Activated CD4-positive, alpha-beta memory T cell treated with anti-CD3 and anti-CD28 coated beads, Interleukin-2, amount 10 ng/mL, durations not matched to agents 7 days and 5 days (primary cell): ENCODE measurements at regions of chr13 and their contacts with region 1.

Region 1: GRCh38 chr13:95403828-95404522 is 102.7 kb upstream of the ABCC4 start:
- DNase-seq: peak; percentile 79
- H3K4me3 Mint-ChIP-seq: peak overlapping the region; percentile 80
- H3K27ac Mint-ChIP-seq: no peak overlapping the region
- H3K4me1 Mint-ChIP-seq: peaks cover 10% of the 10 kb centered on the region
- H3K27me3 Mint-ChIP-seq: peaks cover 3% of the 10 kb centered on the region

Region 2: GRCh38 chr13:95128045-95128643 is 275.8 kb before region 1 on chr13:
- CTCF ChIA-PET with region 1: no interaction called
- POLR2A ChIA-PET with region 1: no interaction called
- DNase-seq: no peak
- H3K4me3 Mint-ChIP-seq: no peak overlapping the region
- H3K27ac Mint-ChIP-seq: no peak overlapping the region
- H3K4me1 Mint-ChIP-seq: no peaks in the 10 kb centered on the region
- H3K27me3 Mint-ChIP-seq: no peaks in the 10 kb centered on the region

Region 3: GRCh38 chr13:95156208-95156607 is 247.8 kb before region 1 on chr13:
- CTCF ChIA-PET with region 1: interaction called, 10 read pairs
- POLR2A ChIA-PET with region 1: no interaction called
- DNase-seq: no peak
- H3K4me3 Mint-ChIP-seq: no peak overlapping the region
- H3K27ac Mint-ChIP-seq: no peak overlapping the region
- H3K4me1 Mint-ChIP-seq: peaks cover 7% of the 10 kb centered on the region
- H3K27me3 Mint-ChIP-seq: no peaks in the 10 kb centered on the region

Region 4: DNA sequence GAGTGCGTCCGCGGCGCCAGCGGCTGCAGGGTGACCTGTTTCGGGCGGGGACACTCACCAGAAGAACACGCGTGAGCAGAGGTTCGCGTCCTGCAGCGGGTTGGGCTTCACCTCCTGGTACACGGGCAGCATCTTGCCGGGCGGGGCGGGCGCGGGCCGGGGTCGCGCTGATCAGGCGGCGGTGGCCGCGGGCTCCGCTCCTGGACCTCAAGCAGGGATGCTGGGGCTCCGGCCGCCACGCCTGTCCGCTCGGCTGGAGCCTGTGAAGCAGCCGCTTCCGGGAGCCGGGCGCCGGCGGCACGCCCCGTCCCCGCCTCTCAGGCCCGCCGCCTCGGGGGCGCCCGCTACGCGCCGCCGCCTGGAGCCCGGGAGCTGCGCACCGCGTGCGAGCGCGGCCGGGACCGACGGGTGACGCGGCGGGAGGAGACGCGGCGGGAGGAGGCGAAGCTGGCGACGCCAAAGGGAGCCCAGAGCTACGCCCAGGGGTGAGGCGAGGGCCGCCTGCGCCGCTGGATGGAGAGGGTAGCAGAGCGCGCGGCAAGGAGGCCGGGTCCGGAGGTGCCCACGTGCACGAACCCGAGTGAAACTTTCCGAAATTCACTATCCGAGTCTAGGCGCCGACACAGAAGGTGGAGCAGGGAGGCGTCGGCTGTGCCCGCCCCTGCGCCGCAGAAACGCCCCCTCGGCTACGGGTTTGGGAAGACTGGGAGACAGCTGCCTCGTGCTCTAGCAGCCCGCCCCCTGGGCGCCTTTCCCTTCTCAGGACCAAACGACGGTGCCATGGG is 102.6 kb before region 1 on chr13 and contains the start of gene ABCC4:
- CTCF ChIA-PET with region 1: interaction called, 23 read pairs
- POLR2A ChIA-PET with region 1: no interaction called
- DNase-seq: peak; percentile 63
- H3K4me3 Mint-ChIP-seq: peak within 1 kb of the TSS; percentile 76
- H3K27ac Mint-ChIP-seq: no peak within 1 kb of the TSS
- H3K4me1 Mint-ChIP-seq: peaks cover 23% of the 10 kb centered on the region
- H3K27me3 Mint-ChIP-seq: peaks cover 6% of the 10 kb centered on the region
- total RNA-seq, gene ABCC4: 3.8 to 4.5 TPM

Region 5: DNA sequence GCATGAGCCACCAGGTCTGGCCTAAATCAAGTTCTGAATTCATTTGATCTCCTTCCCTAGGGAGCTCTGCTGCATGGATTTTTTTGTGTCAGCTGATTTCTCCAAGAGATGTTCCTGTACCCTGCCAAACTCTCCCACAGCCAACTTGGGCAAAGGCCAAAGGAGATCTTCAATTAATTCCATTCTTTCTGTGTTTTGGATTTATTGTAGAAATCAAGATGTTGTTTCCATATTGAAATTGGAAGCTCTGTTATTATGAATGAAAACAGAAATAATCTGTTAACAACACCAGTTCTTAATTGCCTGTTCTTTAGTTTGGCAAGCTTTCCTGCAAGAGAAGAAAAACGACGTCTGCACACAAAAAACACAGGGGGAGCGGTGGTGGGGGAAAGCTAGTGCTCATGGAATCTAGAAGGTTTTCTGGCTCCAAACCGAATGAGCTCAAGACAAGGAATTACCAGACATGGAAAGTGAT is 16.2 kb before region 1 on chr13:
- CTCF ChIA-PET with region 1: interaction called, 23 read pairs
- POLR2A ChIA-PET with region 1: no interaction called
- DNase-seq: no peak
- H3K4me3 Mint-ChIP-seq: no peak overlapping the region
- H3K27ac Mint-ChIP-seq: no peak overlapping the region
- H3K4me1 Mint-ChIP-seq: no peaks in the 10 kb centered on the region
- H3K27me3 Mint-ChIP-seq: peaks cover 16% of the 10 kb centered on the region

Region 6: GRCh38 chr13:95480131-95480545 is 76.2 kb after region 1 on chr13:
- CTCF ChIA-PET with region 1: interaction called, 18 read pairs
- POLR2A ChIA-PET with region 1: no interaction called
- DNase-seq: no peak
- H3K4me3 Mint-ChIP-seq: no peak overlapping the region
- H3K27ac Mint-ChIP-seq: no peak overlapping the region
- H3K4me1 Mint-ChIP-seq: peaks cover 22% of the 10 kb centered on the region
- H3K27me3 Mint-ChIP-seq: peaks cover 9% of the 10 kb centered on the region

Region 7: DNA sequence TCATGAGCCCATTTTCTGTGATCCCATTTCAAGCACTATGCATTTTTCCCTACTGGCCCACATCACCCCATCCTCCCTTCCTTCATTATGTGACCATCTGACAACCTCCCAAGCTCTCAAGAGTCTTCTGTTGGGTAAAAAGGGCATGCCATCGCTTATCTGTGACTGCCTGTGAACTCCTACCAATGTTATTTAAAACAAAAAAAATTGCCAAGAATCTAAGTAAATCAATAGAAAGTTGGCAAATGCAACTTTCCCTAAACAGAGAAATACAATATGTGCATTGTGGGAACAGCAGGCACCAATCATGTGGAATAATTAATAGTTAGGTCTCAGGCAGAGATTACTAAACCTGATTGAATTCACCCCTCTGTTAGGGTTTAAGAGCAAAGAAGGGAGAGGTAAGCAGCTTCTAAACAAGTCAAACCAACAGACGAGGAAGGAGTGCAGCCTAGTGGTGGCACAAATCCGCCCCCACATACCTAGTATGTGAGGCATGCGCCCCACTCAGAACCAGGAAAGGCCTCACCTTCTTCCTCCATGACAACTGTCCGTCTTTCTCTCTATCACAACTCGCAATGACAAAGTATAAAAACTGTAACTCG is 210.8 kb after region 1 on chr13:
- CTCF ChIA-PET with region 1: no interaction called
- POLR2A ChIA-PET with region 1: no interaction called
- DNase-seq: no peak
- H3K4me3 Mint-ChIP-seq: no peak overlapping the region
- H3K27ac Mint-ChIP-seq: no peak overlapping the region
- H3K4me1 Mint-ChIP-seq: no peaks in the 10 kb centered on the region
- H3K27me3 Mint-ChIP-seq: peaks cover 2% of the 10 kb centered on the region